ENCODE measurements at regions of chr1 and their contacts with region 1.

Region 1: GRCh38 chr1:182789138-182790076 is at the start of gene NPL:
- DNase-seq: peak; percentile 95
- H3K4me3 ChIP-seq: peak within 1 kb of the TSS; percentile 61 to 63
- H3K27ac ChIP-seq: peak within 1 kb of the TSS in 1 of 2 experiments; percentile 64; a peak in 2 of 4 replicates
- H3K4me1 ChIP-seq: peaks cover 5 to 9% of the 10 kb centered on the region in 2 experiments; a peak in 2 of 4 replicates
- H3K27me3 ChIP-seq: peaks cover 23% of the 10 kb centered on the region; the same call in 1 of the 2 replicates
- CTCF ChIP-seq: peak; percentile 10; the same call in 1 of the 2 replicates
- EP300 ChIP-seq: no peak
- RAD21 ChIP-seq: no peak
- polyA plus RNA-seq, gene NPL: 1.5 and 2.5 TPM in 2 replicates

Region 2: DNA sequence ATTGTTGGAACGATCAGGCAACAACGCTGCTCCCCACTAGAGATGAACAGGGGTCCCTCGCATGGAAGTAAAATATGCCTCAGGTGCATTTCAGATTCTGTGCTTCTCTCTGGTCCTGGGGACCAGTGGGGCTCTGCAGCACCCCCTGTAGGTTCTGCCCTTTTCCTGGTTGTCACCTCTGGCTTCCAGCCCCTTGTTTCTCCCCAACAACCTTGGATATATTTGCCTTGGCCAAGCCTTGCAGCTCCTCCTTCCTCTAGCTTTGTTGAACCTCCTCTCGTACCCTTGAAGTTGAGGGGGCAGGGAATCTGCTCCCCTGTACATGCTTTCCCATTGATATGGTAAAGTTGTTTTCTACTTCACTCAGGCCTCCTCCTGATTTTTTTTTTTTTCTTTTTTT is 344.9 kb before region 1 on chr1:
- CTCF ChIA-PET with region 1: interaction called, 18 read pairs
- POLR2A ChIA-PET with region 1: no interaction called
- DNase-seq: no peak
- H3K4me3 ChIP-seq: no peak overlapping the region
- H3K27ac ChIP-seq: no peak overlapping the region
- H3K4me1 ChIP-seq: no peaks in the 10 kb centered on the region
- H3K27me3 ChIP-seq: no peaks in the 10 kb centered on the region
- CTCF ChIP-seq: no peak
- EP300 ChIP-seq: no peak
- RAD21 ChIP-seq: no peak

Region 3: GRCh38 chr1:182473556-182473955 is 315.9 kb before region 1 on chr1:
- CTCF ChIA-PET with region 1: no interaction called
- POLR2A ChIA-PET with region 1: no interaction called
- DNase-seq: no peak
- H3K4me3 ChIP-seq: no peak overlapping the region
- H3K27ac ChIP-seq: no peak overlapping the region
- H3K4me1 ChIP-seq: no peaks in the 10 kb centered on the region
- H3K27me3 ChIP-seq: no peaks in the 10 kb centered on the region
- CTCF ChIP-seq: no peak
- EP300 ChIP-seq: no peak
- RAD21 ChIP-seq: no peak

Region 4: GRCh38 chr1:183291802-183292514 is 502.6 kb after region 1 on chr1:
- CTCF ChIA-PET with region 1: no interaction called
- POLR2A ChIA-PET with region 1: no interaction called
- DNase-seq: no peak
- H3K4me3 ChIP-seq: no peak overlapping the region
- H3K27ac ChIP-seq: no peak overlapping the region
- H3K4me1 ChIP-seq: peaks cover 0 to 8% of the 10 kb centered on the region in 2 experiments; a peak in 1 of 4 replicates
- H3K27me3 ChIP-seq: no peaks in the 10 kb centered on the region
- CTCF ChIP-seq: no peak
- EP300 ChIP-seq: no peak
- RAD21 ChIP-seq: no peak